Calu3 (cell line): ENCODE measurements at regions of chr7 and their contacts with region 1.

Region 1: DNA sequence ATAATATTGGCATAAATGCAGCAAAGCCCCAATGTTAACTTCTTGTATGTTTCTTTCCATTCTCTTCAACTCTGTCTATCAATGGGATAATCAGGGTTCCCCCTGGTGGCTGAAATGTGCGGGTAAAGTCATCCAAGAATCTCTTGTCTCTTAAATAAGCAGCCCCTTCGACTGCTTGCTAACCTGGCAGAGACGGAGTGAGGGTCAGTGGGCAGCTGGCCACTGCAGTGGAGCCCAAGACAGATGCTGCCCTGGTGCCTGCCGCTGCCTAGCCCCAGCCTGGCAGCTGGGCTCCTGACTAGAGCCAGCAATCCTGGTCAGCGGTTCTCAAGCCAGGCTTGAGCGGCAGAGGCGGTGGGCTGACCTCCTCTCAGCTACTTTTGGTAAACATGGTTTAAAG is 248.9 kb downstream of the COBL start:
- DNase-seq: peak; percentile 86
- H3K4me3 Mint-ChIP-seq: no peak overlapping the region
- H3K27ac Mint-ChIP-seq: no peak overlapping the region
- H3K4me1 Mint-ChIP-seq: peaks cover 62% of the 10 kb centered on the region
- H3K27me3 Mint-ChIP-seq: no peaks in the 10 kb centered on the region
- CTCF ChIP-seq: peak; percentile 96

Region 2: GRCh38 chr7:50467817-50468610 is 599.7 kb before region 1 on chr7:
- CTCF ChIA-PET with region 1: no interaction called
- intact Hi-C with region 1: loop called (anchors 5 kb)
- DNase-seq: peak; percentile 93
- H3K4me3 Mint-ChIP-seq: peak overlapping the region; percentile 25
- H3K27ac Mint-ChIP-seq: peak overlapping the region; percentile 13
- H3K4me1 Mint-ChIP-seq: no peaks in the 10 kb centered on the region
- H3K27me3 Mint-ChIP-seq: no peaks in the 10 kb centered on the region
- CTCF ChIP-seq: peak; percentile 96

Region 3: DNA sequence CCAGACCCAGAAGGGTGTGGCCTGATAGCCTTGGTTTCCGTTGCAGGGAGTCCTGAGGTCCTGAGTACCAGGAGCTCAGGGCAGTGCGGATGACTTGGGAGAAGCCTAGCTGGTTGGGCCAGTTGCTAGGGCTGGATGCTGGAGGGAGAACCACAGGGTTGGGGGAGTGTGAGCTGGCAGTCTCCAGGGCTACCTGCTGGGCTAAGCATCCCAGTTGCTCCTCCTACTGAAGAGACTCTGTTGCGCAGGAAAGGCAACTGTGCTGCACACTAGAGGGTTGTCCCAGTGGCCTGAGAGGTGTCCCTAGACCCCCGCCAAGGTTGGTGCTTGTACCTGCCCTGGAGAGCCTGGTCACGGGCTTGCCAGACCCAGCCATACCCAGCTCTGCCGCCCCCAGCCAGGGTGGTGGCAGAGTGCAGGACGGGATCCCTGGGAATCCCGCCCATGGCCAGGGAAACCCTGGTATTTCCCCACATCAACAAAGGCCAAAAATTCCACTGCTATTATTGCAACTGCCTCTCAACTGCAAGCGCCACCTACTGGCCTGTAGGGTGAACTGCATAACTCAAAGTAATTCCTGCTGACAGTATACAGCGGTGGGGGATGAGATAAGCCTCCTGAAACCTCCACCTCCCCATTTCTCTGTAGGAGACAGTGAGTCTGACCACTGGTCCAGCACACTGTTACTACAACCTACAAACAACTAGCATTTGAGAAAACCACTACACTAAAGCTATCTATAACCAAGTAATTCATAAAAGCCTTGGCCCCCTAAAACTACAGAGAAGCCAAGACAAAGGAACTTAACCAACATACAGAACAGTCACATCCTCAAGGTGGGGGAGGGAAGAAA is 435.0 kb before region 1 on chr7:
- CTCF ChIA-PET with region 1: no interaction called
- intact Hi-C with region 1: loop called (anchors 5 kb)
- DNase-seq: peak; percentile 80
- H3K4me3 Mint-ChIP-seq: no peak overlapping the region
- H3K27ac Mint-ChIP-seq: peak overlapping the region; percentile 23
- H3K4me1 Mint-ChIP-seq: peaks cover 26% of the 10 kb centered on the region
- H3K27me3 Mint-ChIP-seq: no peaks in the 10 kb centered on the region
- CTCF ChIP-seq: peak; percentile 98

Region 4: DNA sequence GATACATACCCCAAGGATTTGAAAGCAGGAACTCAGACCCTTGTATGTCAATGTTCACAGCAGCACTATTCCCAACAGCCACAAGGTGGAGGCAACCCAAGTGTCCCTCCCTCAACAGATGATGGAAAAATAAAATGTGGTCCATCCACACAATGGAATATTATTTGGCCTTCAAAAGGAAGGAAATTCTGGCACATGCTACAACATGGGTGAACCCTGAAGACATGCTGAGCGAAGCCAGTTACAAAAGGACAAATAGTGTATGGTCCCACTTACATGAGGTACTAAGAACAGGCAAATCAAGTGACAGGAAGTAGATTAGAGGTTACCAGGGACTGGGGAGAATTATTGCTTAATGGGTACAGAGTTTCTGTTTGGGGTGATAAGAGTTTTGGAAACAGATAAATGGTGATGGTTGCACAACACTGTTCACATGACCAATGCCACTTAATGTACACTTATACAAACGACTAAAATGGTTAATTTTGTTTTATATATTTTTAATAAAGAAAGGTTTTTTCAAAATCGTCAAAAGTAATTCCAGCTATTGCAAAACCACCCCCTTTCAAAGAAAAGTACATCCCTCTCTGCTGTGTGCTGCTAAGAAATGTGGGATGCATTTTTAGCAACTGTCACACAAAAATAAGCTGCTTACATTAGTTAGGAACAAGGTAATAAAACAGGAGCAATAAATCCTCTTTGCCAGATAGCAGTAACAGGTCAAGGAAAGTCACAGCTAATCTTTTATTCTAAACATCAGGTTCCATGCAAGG is 370.8 kb before region 1 on chr7:
- CTCF ChIA-PET with region 1: no interaction called
- intact Hi-C with region 1: loop called (anchors 2 kb)
- DNase-seq: peak; percentile 38
- H3K4me3 Mint-ChIP-seq: no peak overlapping the region
- H3K27ac Mint-ChIP-seq: peak overlapping the region; percentile 16
- H3K4me1 Mint-ChIP-seq: peaks cover 15% of the 10 kb centered on the region
- H3K27me3 Mint-ChIP-seq: no peaks in the 10 kb centered on the region
- CTCF ChIP-seq: peak; percentile 79

Region 5: DNA sequence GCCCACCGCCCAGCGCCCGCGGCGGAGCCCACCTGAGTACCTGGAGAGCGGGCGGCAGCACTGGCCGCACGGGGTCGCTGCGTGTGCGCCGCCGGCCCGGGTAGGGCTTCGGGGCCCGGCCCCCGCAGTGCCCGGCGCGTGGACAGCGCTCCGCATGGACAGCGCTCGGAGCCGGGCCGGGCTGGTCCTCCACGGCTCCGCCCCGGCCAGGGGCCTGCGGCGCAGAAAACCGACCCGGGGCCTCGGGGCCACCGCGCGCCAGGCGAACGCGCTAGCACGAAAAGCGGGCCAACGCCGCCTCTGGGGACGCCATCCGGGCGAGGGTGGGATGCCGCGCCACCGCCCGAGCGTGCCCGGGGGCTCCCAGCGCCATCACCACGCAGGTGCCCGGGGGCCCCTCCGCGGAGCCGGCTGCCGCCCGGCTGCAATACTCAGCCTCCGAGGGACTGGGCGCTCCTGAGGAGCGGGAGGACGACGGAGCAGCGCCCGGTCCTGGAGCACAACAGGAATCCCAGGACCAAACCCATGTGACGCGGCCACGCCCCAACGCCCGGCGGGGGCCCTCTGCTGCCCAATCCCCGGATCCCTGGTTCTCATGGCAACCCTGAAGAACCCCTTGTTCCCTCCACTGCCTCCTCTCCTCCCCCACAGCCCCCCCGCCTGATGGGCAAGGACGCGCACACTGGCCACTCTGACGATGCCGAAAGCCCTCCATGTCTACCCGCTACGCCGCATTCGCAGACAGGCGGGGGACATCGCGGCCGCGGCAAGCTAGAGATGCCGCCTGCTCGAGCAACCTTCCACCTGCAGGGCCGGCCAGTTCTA is 285.2 kb before region 1 on chr7 and contains the start of gene GRB10:
- CTCF ChIA-PET with region 1: no interaction called
- intact Hi-C with region 1: loop called (anchors 2 kb)
- DNase-seq: peak; percentile 70
- H3K4me3 Mint-ChIP-seq: peak within 1 kb of the TSS; percentile 72
- H3K27ac Mint-ChIP-seq: no peak within 1 kb of the TSS
- H3K4me1 Mint-ChIP-seq: peaks cover 81% of the 10 kb centered on the region
- H3K27me3 Mint-ChIP-seq: no peaks in the 10 kb centered on the region
- CTCF ChIP-seq: peak; percentile 50
- total RNA-seq, gene GRB10: 86.2 and 90.6 TPM in 2 replicates

Region 6: DNA sequence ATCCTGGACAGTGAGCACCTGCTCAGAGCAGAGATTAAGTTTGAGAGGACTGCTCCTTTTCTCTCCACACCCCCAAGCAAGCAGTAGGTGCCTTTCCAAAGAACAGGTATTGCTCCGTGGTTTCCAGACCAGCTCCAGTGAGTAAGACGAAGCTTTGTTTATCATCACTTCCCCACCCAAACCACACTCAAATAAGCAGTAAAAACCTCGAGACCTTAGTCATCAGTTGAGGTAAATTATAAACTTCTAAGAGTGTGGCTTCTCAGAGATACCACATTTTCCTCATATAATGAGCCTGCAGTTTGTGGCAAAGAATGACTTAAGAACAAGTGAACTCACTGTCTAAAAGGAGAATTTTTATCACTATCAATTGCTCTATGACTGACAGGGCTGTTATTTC is 235.0 kb before region 1 on chr7:
- CTCF ChIA-PET with region 1: no interaction called
- intact Hi-C with region 1: loop called (anchors 2 kb)
- DNase-seq: peak; percentile 75
- H3K4me3 Mint-ChIP-seq: peak overlapping the region; percentile 36
- H3K27ac Mint-ChIP-seq: peak overlapping the region; percentile 86
- H3K4me1 Mint-ChIP-seq: peaks cover 72% of the 10 kb centered on the region
- H3K27me3 Mint-ChIP-seq: no peaks in the 10 kb centered on the region
- CTCF ChIP-seq: no peak

Region 7: GRCh38 chr7:51000956-51001355 is 66.8 kb before region 1 on chr7:
- CTCF ChIA-PET with region 1: no interaction called
- intact Hi-C with region 1: no loop called
- DNase-seq: no peak
- H3K4me3 Mint-ChIP-seq: no peak overlapping the region
- H3K27ac Mint-ChIP-seq: no peak overlapping the region
- H3K4me1 Mint-ChIP-seq: peaks cover 9% of the 10 kb centered on the region
- H3K27me3 Mint-ChIP-seq: peaks cover 17% of the 10 kb centered on the region
- CTCF ChIP-seq: no peak

Region 8: GRCh38 chr7:51045319-51046102 is 22.2 kb before region 1 on chr7:
- CTCF ChIA-PET with region 1: no interaction called
- intact Hi-C with region 1: loop called (anchors 1 kb)
- DNase-seq: peak; percentile 82
- H3K4me3 Mint-ChIP-seq: peak overlapping the region; percentile 43
- H3K27ac Mint-ChIP-seq: peak overlapping the region; percentile 48
- H3K4me1 Mint-ChIP-seq: peaks cover 36% of the 10 kb centered on the region
- H3K27me3 Mint-ChIP-seq: no peaks in the 10 kb centered on the region
- CTCF ChIP-seq: no peak